PC-3 (cell line): ENCODE measurements at regions of chr11 and their contacts with region 1.

Region 1: GRCh38 chr11:11022125-11022730 is 164.4 kb upstream of the ZBED5 start:
- DNase-seq: peak; percentile 57
- ATAC-seq: peak; percentile 34; the same call in 1 of the 2 replicates
- H3K4me3 ChIP-seq: no peak overlapping the region
- H3K27ac ChIP-seq: no peak overlapping the region
- H3K4me1 ChIP-seq: peaks cover 6% of the 10 kb centered on the region
- H3K27me3 ChIP-seq: no peaks in the 10 kb centered on the region
- CTCF ChIP-seq: peak; percentile 56

Region 2: GRCh38 chr11:10770626-10771254 is 251.5 kb before region 1 on chr11:
- CTCF ChIA-PET with region 1: interaction called, 7 read pairs
- POLR2A ChIA-PET with region 1: no interaction called
- intact Hi-C with region 1: loop called (anchors 2 kb)
- DNase-seq: peak; percentile 72
- ATAC-seq: peak; percentile 76
- H3K4me3 ChIP-seq: no peak overlapping the region
- H3K27ac ChIP-seq: no peak overlapping the region
- H3K4me1 ChIP-seq: no peaks in the 10 kb centered on the region
- H3K27me3 ChIP-seq: no peaks in the 10 kb centered on the region
- CTCF ChIP-seq: peak; percentile 91